OCI-LY7 (cell line): ENCODE measurements at regions of chr1 and their contacts with region 1.

Region 1: GRCh38 chr1:29235955-29236684 is at the start of gene PTPRU:
- DNase-seq: peak; percentile 73
- H3K4me3 ChIP-seq: peak within 1 kb of the TSS; percentile 50
- H3K27ac ChIP-seq: no peak within 1 kb of the TSS
- H3K4me1 ChIP-seq: peaks cover 18% of the 10 kb centered on the region
- CTCF ChIP-seq: peak; percentile 71
- total RNA-seq, gene PTPRU: 2.5 and 7.3 TPM in 2 replicates

Region 2: DNA sequence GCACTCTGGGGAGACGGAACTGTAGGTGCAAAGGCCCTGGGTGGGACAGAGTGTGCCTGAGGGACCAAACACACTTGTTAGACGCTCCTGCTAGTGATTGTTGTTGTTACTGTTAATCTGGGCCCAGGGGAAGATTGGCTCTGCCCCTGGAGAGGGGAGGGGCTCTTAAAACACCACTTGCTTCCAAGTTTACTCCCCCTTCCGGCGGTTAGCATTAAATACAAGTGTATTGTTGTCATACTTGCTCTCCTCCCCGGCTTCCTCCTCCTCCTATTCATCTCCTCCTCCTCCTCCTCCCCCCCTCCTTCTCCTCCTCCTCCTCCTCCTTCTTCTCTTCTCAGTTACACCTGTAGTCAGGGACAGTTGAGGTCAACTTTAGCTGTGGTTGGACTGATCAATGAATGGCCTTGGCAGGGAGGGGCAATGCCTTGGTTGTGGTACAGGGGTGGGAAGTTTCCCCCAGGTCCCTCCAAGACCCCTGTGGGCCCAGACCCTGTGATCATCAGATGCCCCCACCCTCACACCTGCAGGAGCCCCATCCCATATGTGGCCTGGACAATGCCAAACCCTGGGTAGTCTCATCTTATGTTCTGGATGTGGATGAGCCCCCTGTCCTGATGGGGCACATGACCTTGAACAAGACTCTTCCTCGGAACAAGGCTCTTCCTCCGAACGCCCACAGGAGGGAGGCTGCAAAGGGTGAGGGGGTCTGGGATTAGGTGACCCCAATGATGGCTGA is 217.6 kb after region 1 on chr1:
- CTCF ChIA-PET with region 1: no interaction called
- POLR2A ChIA-PET with region 1: no interaction called
- intact Hi-C with region 1: loop called (anchors 5 kb)
- DNase-seq: peak; percentile 55
- H3K4me3 ChIP-seq: no peak overlapping the region
- H3K27ac ChIP-seq: no peak overlapping the region
- H3K4me1 ChIP-seq: no peaks in the 10 kb centered on the region
- CTCF ChIP-seq: peak; percentile 70